SK-N-SH (cell line): ENCODE measurements at regions of chr6 and their contacts with region 1.

Region 1: DNA sequence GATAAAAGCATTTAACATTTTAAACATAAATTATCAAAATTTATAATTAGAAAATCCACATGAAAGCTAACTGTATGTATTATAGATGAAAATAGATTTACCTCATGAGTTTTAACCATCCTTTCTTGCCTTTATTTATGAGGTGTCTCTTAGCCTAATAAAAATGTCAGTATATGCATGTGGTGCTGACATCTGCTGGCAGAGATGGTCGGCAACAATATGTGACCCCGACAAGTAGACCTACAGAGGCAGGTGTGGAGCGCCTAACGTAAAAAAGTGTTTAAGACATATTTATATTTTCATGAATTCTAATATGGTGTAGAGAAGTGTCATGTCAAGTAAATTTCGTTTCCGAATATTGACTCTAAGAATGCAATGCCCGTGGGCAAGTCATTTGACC is 149.0 kb upstream of the FUT9 start:
- DNase-seq: peak; percentile 17
- H3K4me3 ChIP-seq: no peak overlapping the region
- H3K27ac ChIP-seq: no peak overlapping the region
- H3K4me1 ChIP-seq: no peaks in the 10 kb centered on the region
- H3K27me3 ChIP-seq: no peaks in the 10 kb centered on the region
- CTCF ChIP-seq: peak; percentile 54
- EP300 ChIP-seq: no peak
- RAD21 ChIP-seq: peak; percentile 70

Region 2: GRCh38 chr6:95431637-95432228 is 435.0 kb before region 1 on chr6:
- CTCF ChIA-PET with region 1: interaction called, 12 read pairs
- POLR2A ChIA-PET with region 1: no interaction called
- DNase-seq: peak; percentile 39
- H3K4me3 ChIP-seq: peak overlapping the region in 1 of 2 experiments; percentile 35; a peak in 1 of 4 replicates
- H3K27ac ChIP-seq: no peak overlapping the region
- H3K4me1 ChIP-seq: no peaks in the 10 kb centered on the region
- H3K27me3 ChIP-seq: no peaks in the 10 kb centered on the region
- CTCF ChIP-seq: peak; percentile 89
- EP300 ChIP-seq: no peak
- RAD21 ChIP-seq: peak; percentile 80

Region 3: DNA sequence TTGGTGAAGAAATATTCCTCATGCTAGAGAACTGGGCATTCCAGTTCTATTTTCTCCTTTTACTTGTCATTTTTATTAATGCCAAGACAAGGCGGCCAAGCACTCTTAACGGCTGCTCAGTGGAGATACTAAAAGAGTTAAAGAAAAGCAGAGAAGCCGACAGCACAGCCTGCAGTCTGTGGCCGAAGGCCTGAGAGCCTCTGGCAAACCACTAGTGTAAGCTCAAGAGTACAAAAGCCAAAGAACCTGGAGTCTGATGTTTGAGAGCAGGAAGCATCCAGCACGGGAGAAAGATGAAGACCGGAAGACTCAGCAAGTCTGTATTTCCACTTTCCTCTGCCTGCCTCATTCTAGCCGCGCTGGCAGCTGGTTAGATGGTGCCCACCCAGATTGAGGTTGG is 18.0 kb before region 1 on chr6:
- CTCF ChIA-PET with region 1: no interaction called
- POLR2A ChIA-PET with region 1: no interaction called
- DNase-seq: no peak
- H3K4me3 ChIP-seq: no peak overlapping the region
- H3K27ac ChIP-seq: no peak overlapping the region
- H3K4me1 ChIP-seq: no peaks in the 10 kb centered on the region
- H3K27me3 ChIP-seq: no peaks in the 10 kb centered on the region
- CTCF ChIP-seq: no peak
- EP300 ChIP-seq: no peak
- RAD21 ChIP-seq: no peak

Region 4: GRCh38 chr6:95879856-95880255 is 13.1 kb after region 1 on chr6:
- CTCF ChIA-PET with region 1: interaction called, 16 read pairs
- POLR2A ChIA-PET with region 1: no interaction called
- DNase-seq: no peak
- H3K4me3 ChIP-seq: no peak overlapping the region
- H3K27ac ChIP-seq: no peak overlapping the region
- H3K4me1 ChIP-seq: no peaks in the 10 kb centered on the region
- H3K27me3 ChIP-seq: no peaks in the 10 kb centered on the region
- CTCF ChIP-seq: no peak
- EP300 ChIP-seq: no peak
- RAD21 ChIP-seq: no peak

Region 5: GRCh38 chr6:96391776-96392360 is 525.1 kb after region 1 on chr6:
- CTCF ChIA-PET with region 1: no interaction called
- POLR2A ChIA-PET with region 1: no interaction called
- DNase-seq: peak; percentile 22
- H3K4me3 ChIP-seq: peak overlapping the region in 1 of 2 experiments; percentile 22; a peak in 1 of 4 replicates
- H3K27ac ChIP-seq: no peak overlapping the region
- H3K4me1 ChIP-seq: peaks cover 0 to 4% of the 10 kb centered on the region in 2 experiments; a peak in 1 of 4 replicates
- H3K27me3 ChIP-seq: no peaks in the 10 kb centered on the region
- CTCF ChIP-seq: no peak
- EP300 ChIP-seq: no peak
- RAD21 ChIP-seq: no peak